ENCODE measurements at regions of chr3 and their contacts with region 1.

Region 1: DNA sequence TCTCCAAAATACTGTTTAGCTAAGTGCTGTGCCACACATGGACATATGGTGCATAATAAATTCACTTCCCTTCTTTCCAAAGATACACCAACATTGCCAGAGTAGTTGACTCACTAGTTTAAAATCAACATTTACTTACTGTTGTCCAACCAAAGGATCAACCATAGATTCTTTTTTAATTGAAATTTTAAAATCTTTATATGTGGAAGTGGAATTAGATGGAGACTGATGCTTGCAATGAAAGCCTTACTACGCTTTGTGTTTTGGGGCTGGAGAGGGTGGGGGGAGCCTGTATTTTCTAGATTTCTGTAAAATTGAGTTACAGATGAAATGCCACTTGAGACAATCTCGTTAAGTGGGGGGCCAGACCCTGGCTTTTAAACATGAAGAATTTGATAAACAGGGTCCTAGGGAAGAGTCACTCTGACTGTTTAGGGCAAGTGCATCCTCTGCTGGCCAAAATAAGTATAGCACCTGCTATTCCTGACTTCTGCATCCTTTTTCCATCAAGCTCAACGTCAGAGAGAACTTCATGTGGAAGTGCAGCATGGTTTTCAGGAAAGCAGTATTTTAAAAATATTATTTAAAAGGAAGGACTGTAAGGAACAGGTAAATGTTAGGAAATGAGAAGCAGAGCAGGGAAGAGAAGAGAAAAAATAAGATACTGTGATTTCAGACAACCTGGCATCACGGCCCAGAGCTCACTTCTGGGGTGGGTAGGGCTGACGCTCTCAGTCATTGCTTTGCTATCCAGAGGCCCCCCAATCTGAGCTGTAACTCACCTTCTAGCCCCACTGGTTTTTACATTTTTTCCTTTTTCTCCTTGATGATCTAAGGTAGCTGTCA is 76.7 kb downstream of the BOC start:
- DNase-seq: peak; percentile 67
- ATAC-seq: no peak
- H3K4me3 Mint-ChIP-seq: no peak overlapping the region
- H3K27ac Mint-ChIP-seq: no peak overlapping the region
- H3K4me1 Mint-ChIP-seq: peaks cover 6% of the 10 kb centered on the region
- H3K27me3 Mint-ChIP-seq: no peaks in the 10 kb centered on the region

Region 2: DNA sequence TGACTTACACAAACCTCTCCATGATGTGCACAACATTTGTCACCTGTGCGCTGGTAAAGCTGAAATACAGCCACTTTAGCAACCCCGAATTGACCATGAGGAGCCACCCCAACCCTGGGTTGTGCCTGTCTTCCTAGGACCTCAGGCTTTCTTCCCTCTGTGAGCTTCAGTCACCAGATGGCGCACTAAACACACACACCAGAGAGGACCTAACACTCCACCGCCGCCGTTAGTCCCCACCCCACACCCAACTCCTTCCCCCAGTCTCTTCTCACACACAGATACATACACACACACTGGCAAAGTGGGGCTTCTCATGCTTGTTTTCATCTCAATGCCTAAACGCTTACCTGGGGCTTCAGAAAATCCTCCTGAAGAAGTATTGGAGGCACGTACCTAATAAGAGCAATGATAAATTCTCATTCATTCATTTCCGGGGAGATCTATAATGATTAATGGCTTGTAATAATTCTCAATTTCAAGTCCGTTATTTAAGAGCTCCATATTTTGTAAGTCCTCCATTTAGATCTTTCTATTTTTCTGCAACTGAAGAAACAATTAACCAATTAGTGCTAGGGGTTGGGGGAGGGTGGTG is 645.0 kb before region 1 on chr3:
- CTCF ChIA-PET with region 1: interaction called, 11 read pairs
- POLR2A ChIA-PET with region 1: no interaction called
- intact Hi-C with region 1: loop called in 1 of 2 experiments (anchors 1 kb)
- DNase-seq: peak; percentile 90
- ATAC-seq: peak; percentile 98
- H3K4me3 Mint-ChIP-seq: peak overlapping the region; percentile 48
- H3K27ac Mint-ChIP-seq: peak overlapping the region; percentile 58
- H3K4me1 Mint-ChIP-seq: peaks cover 17% of the 10 kb centered on the region
- H3K27me3 Mint-ChIP-seq: peaks cover 3% of the 10 kb centered on the region

Region 3: DNA sequence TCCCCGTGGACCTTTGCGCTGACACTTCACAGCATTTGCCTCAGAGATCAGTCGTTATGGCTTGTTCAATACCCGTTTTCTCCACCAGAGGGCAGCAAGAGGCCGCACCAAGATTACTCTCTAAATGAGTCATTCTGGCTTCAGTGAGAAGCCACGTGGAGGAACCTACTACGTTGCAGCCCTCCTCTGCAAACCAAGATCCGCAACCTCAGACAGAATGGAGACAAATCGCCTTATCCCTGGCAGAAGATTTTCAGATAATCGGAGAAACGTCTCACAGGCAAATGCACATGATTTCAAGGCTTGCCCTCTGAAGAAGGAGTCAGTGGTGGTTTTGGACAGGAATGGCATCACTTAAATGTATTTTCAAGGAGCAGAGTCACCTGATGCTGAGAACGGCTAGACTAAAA is 236.7 kb before region 1 on chr3:
- CTCF ChIA-PET with region 1: interaction called, 31 read pairs
- POLR2A ChIA-PET with region 1: no interaction called
- intact Hi-C with region 1: loop called (anchors 1 kb)
- DNase-seq: peak; percentile 92
- ATAC-seq: peak; percentile 95
- H3K4me3 Mint-ChIP-seq: no peak overlapping the region
- H3K27ac Mint-ChIP-seq: no peak overlapping the region
- H3K4me1 Mint-ChIP-seq: peaks cover 2% of the 10 kb centered on the region
- H3K27me3 Mint-ChIP-seq: no peaks in the 10 kb centered on the region

Region 4: DNA sequence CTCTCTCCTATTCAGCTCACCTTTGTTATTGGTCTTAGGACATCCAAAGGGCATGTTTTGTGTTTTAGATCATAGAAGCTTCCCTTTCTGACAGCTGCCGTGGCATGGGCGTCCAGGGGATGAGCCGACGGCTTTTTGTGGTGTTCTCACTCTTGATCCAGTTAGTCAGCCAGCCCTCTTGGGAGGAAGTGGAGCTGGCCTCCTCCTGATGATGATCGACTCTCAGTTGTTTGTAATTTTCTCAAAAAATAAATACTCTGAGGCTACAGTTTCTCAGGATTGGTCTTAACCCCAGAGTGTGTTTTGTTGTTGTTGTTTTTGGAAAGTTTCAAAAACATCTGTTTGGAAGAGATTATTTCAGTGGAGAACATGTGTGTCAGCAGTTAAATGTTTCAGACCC is 42.2 kb before region 1 on chr3:
- CTCF ChIA-PET with region 1: interaction called, 13 read pairs
- POLR2A ChIA-PET with region 1: no interaction called
- intact Hi-C with region 1: no loop called
- DNase-seq: no peak
- ATAC-seq: no peak
- H3K4me3 Mint-ChIP-seq: no peak overlapping the region
- H3K27ac Mint-ChIP-seq: no peak overlapping the region
- H3K4me1 Mint-ChIP-seq: peaks cover 16% of the 10 kb centered on the region
- H3K27me3 Mint-ChIP-seq: peaks cover 8% of the 10 kb centered on the region

Region 5: DNA sequence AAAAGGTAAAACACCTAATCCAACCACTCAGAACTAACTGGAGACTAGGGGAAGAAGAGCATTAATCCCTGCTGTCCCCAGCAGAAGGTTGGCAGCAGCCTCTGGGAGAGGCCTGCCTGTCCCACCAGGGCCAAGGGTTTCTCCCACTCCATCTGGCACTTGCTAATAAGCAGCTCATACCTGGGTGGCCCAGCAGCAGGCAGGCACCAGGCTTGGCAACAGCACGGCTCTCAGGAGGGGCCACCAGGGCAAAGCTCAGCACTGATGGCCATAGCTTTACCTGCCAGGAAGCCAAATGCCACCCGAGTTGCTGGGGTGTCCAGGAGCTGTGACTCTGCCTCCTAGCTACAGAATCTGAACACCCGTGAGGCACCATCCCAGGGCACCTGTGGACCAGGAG is 18.4 kb before region 1 on chr3:
- CTCF ChIA-PET with region 1: interaction called, 16 read pairs
- POLR2A ChIA-PET with region 1: no interaction called
- intact Hi-C with region 1: no loop called
- DNase-seq: no peak
- ATAC-seq: no peak
- H3K4me3 Mint-ChIP-seq: no peak overlapping the region
- H3K27ac Mint-ChIP-seq: no peak overlapping the region
- H3K4me1 Mint-ChIP-seq: no peaks in the 10 kb centered on the region
- H3K27me3 Mint-ChIP-seq: no peaks in the 10 kb centered on the region

Region 6: DNA sequence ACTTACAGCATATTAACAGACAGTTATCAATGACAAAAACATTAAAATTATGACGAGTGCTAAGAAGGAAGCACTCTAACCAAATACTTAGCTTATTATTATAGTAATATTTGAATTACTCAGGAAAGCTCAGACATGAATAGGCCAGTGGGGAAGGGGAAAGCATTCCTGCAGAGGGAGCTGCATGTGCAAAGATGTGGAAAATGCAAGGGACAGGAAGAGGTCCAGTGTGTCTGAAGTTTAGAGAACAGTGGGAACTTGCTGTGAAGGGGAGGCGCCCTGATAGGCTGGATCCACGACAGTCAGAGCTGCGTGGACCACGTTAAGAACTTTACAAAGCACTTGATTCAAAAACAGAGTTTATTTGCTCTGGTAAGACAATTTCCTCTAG is 228.1 kb after region 1 on chr3:
- CTCF ChIA-PET with region 1: no interaction called
- POLR2A ChIA-PET with region 1: no interaction called
- intact Hi-C with region 1: no loop called
- DNase-seq: no peak
- ATAC-seq: no peak
- H3K4me3 Mint-ChIP-seq: no peak overlapping the region
- H3K27ac Mint-ChIP-seq: peak overlapping the region; percentile 72
- H3K4me1 Mint-ChIP-seq: peaks cover 8% of the 10 kb centered on the region
- H3K27me3 Mint-ChIP-seq: peaks cover 6% of the 10 kb centered on the region

Region 7: DNA sequence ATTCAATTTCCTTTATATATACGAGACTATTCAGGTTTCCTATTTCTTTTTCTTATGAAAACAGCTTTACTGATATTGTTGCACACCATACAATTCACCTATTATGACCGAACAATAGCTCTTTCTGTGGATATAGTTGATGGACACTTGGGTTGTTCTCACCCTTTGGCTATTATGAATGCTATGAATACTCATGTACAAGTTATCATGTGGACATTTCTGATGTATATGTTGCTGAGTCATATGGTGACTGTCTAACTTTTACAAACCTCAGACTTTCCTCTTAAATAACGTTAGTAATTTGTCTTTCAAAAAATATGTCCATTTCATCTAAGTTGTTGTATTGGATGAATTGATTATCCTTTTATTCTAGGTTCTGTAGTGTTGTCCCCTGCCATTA is 424.1 kb after region 1 on chr3:
- CTCF ChIA-PET with region 1: no interaction called
- POLR2A ChIA-PET with region 1: no interaction called
- intact Hi-C with region 1: no loop called
- DNase-seq: no peak
- ATAC-seq: peak; percentile 51
- H3K4me3 Mint-ChIP-seq: no peak overlapping the region
- H3K27ac Mint-ChIP-seq: no peak overlapping the region
- H3K4me1 Mint-ChIP-seq: peaks cover 3% of the 10 kb centered on the region
- H3K27me3 Mint-ChIP-seq: peaks cover 9% of the 10 kb centered on the region

Region 8: DNA sequence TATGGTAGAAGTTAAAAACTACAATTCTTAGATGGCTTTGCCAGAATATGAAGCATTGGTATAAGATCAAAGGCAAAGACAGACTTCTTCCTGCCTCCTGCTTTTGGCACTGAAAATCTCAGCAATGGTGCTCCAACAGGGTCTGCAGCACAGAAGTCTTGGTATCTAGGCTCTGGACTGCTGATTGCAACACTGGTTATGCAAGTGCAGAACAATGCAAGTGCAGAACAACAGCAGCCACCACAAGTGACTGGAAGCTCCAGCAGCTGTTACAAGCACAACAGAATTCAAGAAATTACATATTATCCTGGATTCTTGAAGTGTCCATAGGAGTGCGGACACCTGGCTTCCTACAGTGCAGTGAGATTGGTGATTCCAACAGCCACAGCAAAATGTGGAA is 1825.3 kb after region 1 on chr3:
- CTCF ChIA-PET with region 1: no interaction called
- POLR2A ChIA-PET with region 1: no interaction called
- intact Hi-C with region 1: no loop called
- DNase-seq: no peak
- ATAC-seq: no peak
- H3K4me3 Mint-ChIP-seq: no peak overlapping the region
- H3K27ac Mint-ChIP-seq: no peak overlapping the region
- H3K4me1 Mint-ChIP-seq: peaks cover 9% of the 10 kb centered on the region
- H3K27me3 Mint-ChIP-seq: no peaks in the 10 kb centered on the region

Measured in activated CD4-positive, alpha-beta T cell treated with anti-CD3 and anti-CD28 coated beads for 36 hours (primary cell).